ENCODE measurements at regions of chr12 and their contacts with region 1.

Region 1: GRCh38 chr12:26274441-26275312 is 79.3 kb downstream of the SSPN start:
- DNase-seq: peak; percentile 75
- H3K4me3 Mint-ChIP-seq: no peak overlapping the region
- H3K27ac Mint-ChIP-seq: peak overlapping the region; percentile 70
- H3K4me1 Mint-ChIP-seq: peaks cover 19% of the 10 kb centered on the region
- H3K27me3 Mint-ChIP-seq: peaks cover 9% of the 10 kb centered on the region

Region 2: DNA sequence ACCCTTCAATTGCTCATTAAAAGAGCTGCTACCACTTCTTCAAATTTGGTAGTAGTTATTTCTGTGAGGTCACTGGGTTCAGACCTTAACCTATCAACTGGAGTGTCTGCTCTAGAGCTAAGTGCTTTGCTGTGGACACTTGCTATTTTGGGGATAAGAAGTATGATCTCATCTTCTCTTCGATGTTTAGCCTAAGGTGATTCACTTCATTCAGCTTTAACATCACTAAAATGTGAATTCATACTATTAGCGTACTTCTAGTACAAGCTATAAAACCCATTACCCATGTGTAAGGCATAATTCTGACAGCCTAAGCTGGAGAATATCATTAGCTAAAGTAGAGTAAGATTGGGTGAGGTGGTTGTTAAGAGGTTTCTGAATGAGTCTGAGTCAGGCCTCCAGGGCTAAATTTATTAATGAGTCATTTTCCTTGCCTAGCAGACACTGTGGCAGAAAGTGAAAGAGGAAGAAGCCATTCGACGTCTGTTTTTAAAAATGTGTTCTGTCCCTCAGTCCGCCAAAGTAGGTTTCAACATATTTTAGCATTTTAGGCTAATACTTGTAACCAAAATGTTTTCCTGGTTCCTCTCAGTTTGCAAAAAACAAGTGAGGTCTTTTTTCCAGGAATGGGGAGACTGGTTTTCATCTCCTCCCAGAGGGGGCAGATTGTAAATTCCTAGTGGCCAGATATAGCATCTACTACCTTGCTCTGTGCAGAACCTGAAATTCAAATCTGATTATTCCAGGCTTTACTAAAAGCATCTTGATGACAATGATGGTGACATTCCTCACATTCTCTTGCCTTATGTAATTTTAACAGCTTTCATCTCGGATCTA is 24.3 kb after region 1 on chr12:
- intact Hi-C with region 1: loop called (anchors 1 kb)
- DNase-seq: peak; percentile 68
- H3K4me3 Mint-ChIP-seq: peak overlapping the region; percentile 57
- H3K27ac Mint-ChIP-seq: peak overlapping the region; percentile 2
- H3K4me1 Mint-ChIP-seq: peaks cover 10% of the 10 kb centered on the region
- H3K27me3 Mint-ChIP-seq: peaks cover 22% of the 10 kb centered on the region

Region 3: DNA sequence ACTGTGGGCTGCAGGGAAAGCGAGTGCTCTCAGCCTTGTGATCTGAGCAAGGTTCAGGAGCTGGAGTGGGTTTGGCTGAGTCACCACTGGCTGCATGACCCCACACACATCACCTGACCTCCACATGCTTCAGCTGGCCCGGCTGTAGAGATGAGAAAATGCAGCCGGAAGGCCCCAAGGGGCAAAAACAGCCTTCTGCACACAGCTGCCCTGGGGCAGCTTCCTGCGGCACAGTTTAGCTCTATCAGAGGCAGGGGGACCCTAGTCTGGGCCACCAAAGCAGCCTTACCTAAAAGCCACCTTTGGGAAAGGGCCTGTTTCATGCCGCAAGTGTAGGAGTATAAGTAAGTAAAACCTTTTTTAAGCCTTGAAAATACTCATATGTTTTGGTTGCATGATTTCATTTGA is 44.0 kb after region 1 on chr12:
- intact Hi-C with region 1: loop called (anchors 1 kb)
- DNase-seq: no peak
- H3K4me3 Mint-ChIP-seq: no peak overlapping the region
- H3K27ac Mint-ChIP-seq: no peak overlapping the region
- H3K4me1 Mint-ChIP-seq: peaks cover 6% of the 10 kb centered on the region
- H3K27me3 Mint-ChIP-seq: peaks cover 9% of the 10 kb centered on the region

Region 4: DNA sequence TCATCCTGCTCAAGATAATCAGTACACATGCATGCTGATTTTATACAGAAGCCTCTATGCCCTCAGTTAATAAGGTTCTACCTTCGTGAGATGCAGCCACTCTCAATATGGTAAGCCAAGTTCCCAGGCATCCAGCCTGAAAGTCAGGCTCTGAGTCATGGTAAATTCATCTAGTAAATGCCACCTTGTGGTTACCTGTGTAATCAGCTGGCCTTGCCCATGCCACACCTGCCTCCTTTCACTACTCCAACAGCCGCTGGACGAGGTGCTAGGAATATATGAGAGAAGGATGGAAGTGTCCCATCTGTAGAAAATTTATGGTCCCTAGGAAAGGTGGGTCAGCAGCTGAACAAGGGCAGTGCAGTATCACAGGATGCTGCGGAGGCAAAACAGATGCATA is 128.0 kb after region 1 on chr12:
- intact Hi-C with region 1: no loop called
- DNase-seq: no peak
- H3K4me3 Mint-ChIP-seq: no peak overlapping the region
- H3K27ac Mint-ChIP-seq: no peak overlapping the region
- H3K4me1 Mint-ChIP-seq: no peaks in the 10 kb centered on the region
- H3K27me3 Mint-ChIP-seq: no peaks in the 10 kb centered on the region

Measured in activated CD4-positive, alpha-beta T cell treated with anti-CD3 and anti-CD28 coated beads, Interleukin-2, amount 10 ng/mL, durations not matched to agents 24 days and 14 days (primary cell).